Activated CD4-positive, alpha-beta T cell treated with anti-CD3 and anti-CD28 coated beads for 36 hours (primary cell): ENCODE measurements at regions of chr12 and their contacts with region 1.

Region 1: DNA sequence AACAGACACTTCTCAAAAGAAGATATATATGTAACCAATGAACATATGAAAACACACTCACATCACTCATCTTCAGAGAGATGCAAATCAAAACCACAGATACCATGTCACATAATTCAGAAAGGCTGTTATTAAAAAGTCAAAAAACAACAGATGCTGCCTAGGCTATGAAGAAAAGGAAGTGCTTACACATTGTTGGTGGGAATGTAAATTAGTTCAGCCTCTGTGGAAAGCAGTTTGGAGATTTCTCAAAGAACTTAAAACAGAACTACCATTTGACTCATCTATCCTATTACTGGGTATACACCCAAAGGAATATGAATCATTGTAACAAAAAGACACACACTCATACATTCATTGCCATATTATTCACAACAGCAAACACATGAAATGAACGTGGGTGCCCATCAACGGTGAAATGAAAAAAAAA is 35.1 kb downstream of the EIF2S3B start:
- DNase-seq: no peak
- ATAC-seq: peak; percentile 95
- H3K4me3 Mint-ChIP-seq: no peak overlapping the region
- H3K27ac Mint-ChIP-seq: peak overlapping the region; percentile 26
- H3K4me1 Mint-ChIP-seq: peaks cover 13% of the 10 kb centered on the region
- H3K27me3 Mint-ChIP-seq: peaks cover 42% of the 10 kb centered on the region

Region 2: GRCh38 chr12:10320643-10321042 is 220.1 kb before region 1 on chr12:
- CTCF ChIA-PET with region 1: no interaction called
- POLR2A ChIA-PET with region 1: no interaction called
- intact Hi-C with region 1: loop called (anchors 1 kb)
- DNase-seq: no peak
- ATAC-seq: peak; percentile 91
- H3K4me3 Mint-ChIP-seq: no peak overlapping the region
- H3K27ac Mint-ChIP-seq: peak overlapping the region; percentile 32
- H3K4me1 Mint-ChIP-seq: peaks cover 30% of the 10 kb centered on the region
- H3K27me3 Mint-ChIP-seq: peaks cover 10% of the 10 kb centered on the region

Region 3: DNA sequence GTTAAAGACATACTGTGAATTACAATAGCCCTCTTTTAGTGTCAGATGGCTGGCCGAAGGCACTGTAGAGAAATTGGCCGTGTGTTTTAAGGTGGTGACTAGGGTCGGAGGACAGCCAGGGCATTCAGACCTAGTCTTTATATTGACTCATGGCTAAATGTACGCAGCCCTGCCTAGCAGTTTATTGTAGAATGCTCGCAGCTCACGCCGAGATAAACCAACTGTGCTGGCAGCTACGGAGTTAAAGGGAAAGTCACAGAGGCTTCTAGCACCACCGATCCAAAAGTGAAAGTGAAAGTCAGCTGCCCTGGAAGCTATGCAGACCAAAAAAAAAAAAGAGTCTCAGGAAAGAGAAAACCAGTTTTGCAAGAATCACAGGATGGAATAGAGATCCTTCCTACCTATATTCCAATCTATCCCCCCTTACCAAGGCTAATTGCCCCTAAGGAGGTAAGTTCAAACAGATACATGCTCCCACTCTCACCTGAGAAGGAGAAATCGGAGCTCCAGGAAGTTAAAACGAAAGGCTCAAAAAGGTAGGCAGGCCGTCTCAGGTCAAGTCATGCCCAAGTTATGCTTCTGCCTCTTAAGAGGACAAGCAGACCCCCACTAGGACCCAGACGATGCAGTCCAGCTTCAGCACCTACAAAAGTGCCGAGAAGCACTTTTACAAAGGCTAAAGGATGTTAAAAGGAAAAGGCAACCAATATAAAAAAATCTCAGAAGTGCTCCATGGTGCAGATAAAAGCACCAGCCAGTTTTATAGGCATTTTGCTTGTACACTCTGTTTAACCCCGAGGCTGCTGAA is 175.8 kb before region 1 on chr12:
- CTCF ChIA-PET with region 1: interaction called, 3 read pairs
- POLR2A ChIA-PET with region 1: no interaction called
- intact Hi-C with region 1: loop called in 1 of 2 experiments (anchors 1 kb)
- DNase-seq: peak; percentile 76
- ATAC-seq: peak; percentile 84
- H3K4me3 Mint-ChIP-seq: no peak overlapping the region
- H3K27ac Mint-ChIP-seq: no peak overlapping the region
- H3K4me1 Mint-ChIP-seq: peaks cover 3% of the 10 kb centered on the region
- H3K27me3 Mint-ChIP-seq: no peaks in the 10 kb centered on the region

Region 4: GRCh38 chr12:10501031-10501430 is 39.8 kb before region 1 on chr12:
- CTCF ChIA-PET with region 1: interaction called, 3 read pairs
- POLR2A ChIA-PET with region 1: no interaction called
- intact Hi-C with region 1: loop called in 1 of 2 experiments (anchors 2 kb)
- DNase-seq: no peak
- ATAC-seq: no peak
- H3K4me3 Mint-ChIP-seq: no peak overlapping the region
- H3K27ac Mint-ChIP-seq: no peak overlapping the region
- H3K4me1 Mint-ChIP-seq: peaks cover 18% of the 10 kb centered on the region
- H3K27me3 Mint-ChIP-seq: peaks cover 27% of the 10 kb centered on the region

Region 5: DNA sequence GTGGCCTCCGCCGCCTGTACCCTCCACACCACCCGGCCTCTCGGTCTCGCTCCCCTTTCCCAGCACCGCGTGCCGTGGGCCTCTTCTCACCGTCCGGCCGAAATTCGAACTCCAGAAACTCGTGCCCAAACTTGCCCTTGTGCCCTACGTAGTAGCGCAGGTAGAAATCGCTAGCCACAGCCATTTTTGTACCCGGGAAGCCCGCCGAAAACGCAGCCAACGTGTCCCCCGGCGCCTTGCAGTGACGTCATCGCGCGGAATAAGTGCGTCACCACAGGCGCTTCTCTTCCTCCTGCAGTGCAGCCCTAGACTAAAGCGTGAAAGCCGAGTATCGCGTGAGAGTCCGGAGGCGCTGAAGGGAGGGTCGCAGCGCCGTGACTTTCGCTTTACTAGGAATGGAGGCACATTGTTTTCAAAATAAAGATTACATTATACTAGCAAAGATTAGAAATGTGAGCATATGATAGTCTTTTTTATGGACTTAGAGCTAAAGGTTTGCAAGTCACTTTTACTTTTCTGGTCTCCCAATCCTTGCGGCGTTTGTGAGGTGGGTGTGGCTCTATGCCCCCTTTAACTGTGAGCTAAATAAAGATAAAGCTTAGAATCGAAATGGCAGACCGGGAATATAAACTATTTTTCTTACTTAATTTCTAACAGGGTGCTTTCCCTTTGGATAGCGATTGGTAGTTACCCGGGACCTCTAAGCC is 72.7 kb after region 1 on chr12 and contains the start of gene MAGOHB:
- CTCF ChIA-PET with region 1: no interaction called
- POLR2A ChIA-PET with region 1: no interaction called
- intact Hi-C with region 1: loop called in 1 of 2 experiments (anchors 2 kb)
- DNase-seq: peak; percentile 99
- ATAC-seq: peak; percentile 96
- H3K4me3 Mint-ChIP-seq: peak within 1 kb of the TSS; percentile 99
- H3K27ac Mint-ChIP-seq: peak within 1 kb of the TSS; percentile 100
- H3K4me1 Mint-ChIP-seq: peaks cover 25% of the 10 kb centered on the region
- H3K27me3 Mint-ChIP-seq: peaks cover 6% of the 10 kb centered on the region
- total RNA-seq, gene MAGOHB: 66.3 to 89.3 TPM